Mucosa of descending colon (tissue), 3 donors: ENCODE measurements at regions of chr1 and their contacts with region 1.

Region 1: DNA sequence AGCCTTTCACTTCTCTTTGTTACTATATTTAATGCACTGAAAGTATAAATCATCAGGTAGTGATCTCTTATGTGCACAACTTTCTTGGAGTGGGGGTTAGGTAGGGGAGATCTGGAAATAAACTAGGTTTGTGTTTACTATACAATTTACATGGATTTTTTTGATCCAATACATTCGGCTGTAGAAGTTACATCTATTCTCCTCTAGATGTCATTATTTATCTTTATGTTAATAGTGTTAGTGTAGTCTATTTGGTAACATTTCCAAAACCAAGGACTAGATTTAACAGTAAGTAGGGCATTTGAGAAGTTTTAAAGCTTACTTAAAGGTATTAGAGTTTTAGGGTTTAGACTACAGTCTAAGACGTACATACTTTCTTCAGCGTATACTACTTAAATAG is 5.4 kb downstream of the VPS45 start:
- DNase-seq: no peak
- ATAC-seq: no peak
- H3K4me3 ChIP-seq: no peak overlapping the region
- H3K4me1 ChIP-seq: no peaks in the 10 kb centered on the region
- CTCF ChIP-seq: no peak

Region 2: DNA sequence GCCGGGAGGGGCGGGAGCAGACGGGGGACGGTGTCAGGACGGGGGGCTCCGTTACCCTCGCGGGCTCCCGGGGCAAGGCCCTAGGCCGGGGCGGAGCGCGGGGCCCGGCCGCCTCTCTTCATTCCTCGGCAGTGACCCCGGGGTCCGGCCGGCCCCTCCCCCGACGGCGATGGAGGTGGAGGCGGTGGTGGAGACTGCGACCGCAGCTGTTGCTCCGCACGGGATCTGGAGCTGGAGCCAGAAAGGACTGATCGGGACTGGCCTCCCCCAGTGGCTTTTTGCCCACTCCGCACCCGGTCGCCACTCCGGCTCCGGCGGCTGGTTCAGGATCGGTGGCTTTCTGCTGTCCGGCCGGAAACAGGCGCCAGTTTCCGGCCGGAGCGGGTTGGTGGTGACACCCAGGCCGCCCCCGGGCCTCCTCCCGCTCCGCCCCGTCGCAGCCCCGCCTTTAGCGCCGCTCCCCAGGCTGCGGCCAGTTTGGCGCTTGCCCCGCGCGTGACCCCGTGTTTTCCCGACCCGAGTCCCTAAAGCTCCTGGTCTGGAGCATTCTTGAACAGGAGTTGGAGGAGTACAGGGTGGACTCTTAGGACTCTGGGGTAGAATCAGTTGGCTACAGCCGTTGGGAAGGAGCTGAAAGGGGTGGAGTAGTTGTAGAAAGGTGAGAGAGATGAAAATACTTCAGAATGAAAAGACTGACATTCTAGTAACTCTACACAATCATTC is 62.4 kb before region 1 on chr1 and contains the start of gene OTUD7B:
- intact Hi-C with region 1: no loop called
- DNase-seq: peak; percentile 88 to 94 (median 91)
- ATAC-seq: peak; percentile 98
- H3K4me3 ChIP-seq: peak within 1 kb of the TSS; percentile 83
- H3K4me1 ChIP-seq: peaks cover 29% of the 10 kb centered on the region
- CTCF ChIP-seq: no peak
- total RNA-seq, gene OTUD7B: 39.2 to 52.7 (median 49.3) TPM

Region 3: GRCh38 chr1:150121236-150121862 is 48.4 kb after region 1 on chr1:
- intact Hi-C with region 1: no loop called
- DNase-seq: no peak
- ATAC-seq: no peak
- H3K4me3 ChIP-seq: no peak overlapping the region
- H3K4me1 ChIP-seq: no peaks in the 10 kb centered on the region
- CTCF ChIP-seq: no peak

Region 4: GRCh38 chr1:150162862-150163706 is 90.1 kb after region 1 on chr1:
- intact Hi-C with region 1: loop called (anchors 10 kb)
- DNase-seq: peak; percentile 65 to 81 (median 81)
- ATAC-seq: peak; percentile 86
- H3K4me3 ChIP-seq: no peak overlapping the region
- H3K4me1 ChIP-seq: no peaks in the 10 kb centered on the region
- CTCF ChIP-seq: no peak

Region 5: DNA sequence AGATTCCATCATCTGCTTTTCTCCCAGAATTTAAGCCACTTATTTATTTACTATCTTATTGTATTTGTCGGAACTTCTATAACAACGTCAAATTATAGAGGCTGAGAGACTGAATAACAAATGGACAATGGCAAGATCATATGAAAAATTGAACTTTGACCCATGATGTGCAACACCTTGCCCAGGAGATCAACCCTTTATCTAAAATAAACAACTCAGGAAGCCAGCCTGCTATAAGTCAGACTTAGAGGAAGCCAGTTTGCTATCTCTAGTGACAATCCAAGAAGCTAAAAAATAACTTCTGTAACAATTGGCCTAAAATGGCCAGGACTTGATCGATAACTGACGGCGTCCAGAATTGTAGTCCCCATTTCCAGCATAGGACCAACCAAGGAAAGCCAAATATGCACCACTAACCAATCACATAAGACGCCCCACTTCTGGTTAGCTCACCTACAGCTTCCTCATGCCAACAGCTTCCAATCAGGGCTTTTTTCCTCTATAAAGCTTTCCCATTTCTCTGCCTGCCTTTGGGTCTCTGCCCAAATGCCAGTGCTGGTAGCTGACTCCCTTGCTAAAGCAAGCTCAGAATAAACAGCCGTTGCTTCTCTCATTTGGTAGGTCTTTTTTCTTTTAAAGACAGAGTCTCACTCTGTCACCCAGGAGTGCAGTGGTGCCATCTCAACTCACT is 134.5 kb after region 1 on chr1:
- intact Hi-C with region 1: no loop called
- DNase-seq: no peak
- ATAC-seq: peak; percentile 79
- H3K4me3 ChIP-seq: no peak overlapping the region
- H3K4me1 ChIP-seq: peaks cover 14% of the 10 kb centered on the region
- CTCF ChIP-seq: no peak

Region 6: DNA sequence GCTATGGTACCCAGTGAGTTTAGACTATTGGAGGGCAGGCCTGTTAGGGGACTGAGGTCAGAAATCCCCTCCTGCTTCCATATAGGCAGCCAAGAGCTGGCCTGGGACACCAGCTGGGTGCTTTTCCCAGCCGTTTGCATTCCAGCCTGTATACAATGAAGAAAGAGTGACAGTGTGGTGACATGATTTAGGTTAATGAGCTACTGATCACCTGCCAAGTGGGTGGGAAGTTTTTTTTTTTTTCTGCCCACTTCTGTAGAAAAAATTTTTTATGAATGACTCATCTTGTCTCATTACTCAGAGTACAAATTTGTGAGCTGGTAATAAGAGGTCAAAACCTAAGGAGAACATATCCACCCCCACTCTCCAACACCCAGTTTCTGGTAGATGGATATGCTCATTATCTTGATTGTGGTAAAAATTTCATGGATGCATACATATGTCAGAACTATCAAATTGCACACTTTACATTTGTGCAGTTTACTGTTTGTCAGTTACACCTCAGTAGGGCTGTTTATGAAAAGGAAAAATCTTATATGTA is 1421.9 kb after region 1 on chr1:
- intact Hi-C with region 1: no loop called
- DNase-seq: no peak
- ATAC-seq: peak; percentile 68
- H3K4me3 ChIP-seq: no peak overlapping the region
- H3K4me1 ChIP-seq: no peaks in the 10 kb centered on the region
- CTCF ChIP-seq: no peak